PC-9 (cell line): ENCODE measurements at regions of chr20 and their contacts with region 1.

Region 1: DNA sequence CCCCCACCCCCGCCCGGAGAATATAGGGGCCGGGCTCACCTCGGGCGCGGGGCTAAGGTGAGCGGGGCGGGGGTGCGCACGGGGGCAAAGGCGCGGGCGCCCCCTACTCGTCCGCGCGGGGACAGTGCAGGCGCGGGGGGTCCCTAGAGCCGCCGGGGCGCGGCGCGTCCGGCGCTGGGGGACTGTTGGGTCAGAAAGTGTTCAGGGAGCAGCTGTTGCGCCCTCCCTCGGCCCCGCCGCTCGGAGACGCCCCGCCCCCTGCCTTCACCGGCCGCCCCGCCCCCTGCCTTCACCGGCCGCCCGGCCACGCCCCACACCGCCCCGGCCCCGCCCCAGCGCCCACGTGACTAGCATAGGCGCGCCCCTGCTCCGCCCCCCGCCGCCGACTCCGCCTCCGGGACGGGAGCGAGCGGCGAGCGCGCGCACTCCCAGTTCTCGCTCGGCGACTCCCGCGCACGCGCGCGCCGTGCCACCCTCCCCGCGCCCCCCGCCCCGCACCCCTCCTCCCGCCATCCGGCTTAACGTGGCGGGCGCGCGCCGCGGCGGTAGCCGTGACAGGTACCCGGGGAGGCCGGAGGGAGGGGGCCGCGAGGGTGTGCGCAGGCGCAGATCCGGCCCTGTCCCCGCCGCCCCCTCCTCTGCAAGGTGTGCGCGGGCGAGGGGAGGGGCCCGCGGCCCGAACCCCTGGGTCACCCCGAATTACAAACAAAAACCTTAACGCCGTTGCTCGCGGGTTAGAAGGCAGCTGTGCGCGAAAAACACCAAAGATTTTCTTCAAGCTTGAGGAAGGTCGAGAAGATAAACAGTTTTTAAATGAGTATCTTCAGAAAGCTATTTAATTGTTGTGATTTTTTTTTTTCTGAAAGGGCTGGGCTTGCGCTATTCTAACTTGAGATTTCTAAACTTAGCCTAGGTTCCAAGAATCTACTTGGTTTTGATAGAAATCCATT is 704 bp upstream of the ZNF217 start:
- DNase-seq: peak; percentile 73 to 98
- H3K4me3 ChIP-seq: peak overlapping the region; percentile 99
- H3K27ac ChIP-seq: peak overlapping the region; percentile 98
- H3K4me1 ChIP-seq: peaks cover 59% of the 10 kb centered on the region
- H3K27me3 ChIP-seq: no peaks in the 10 kb centered on the region
- CTCF ChIP-seq: no peak; the same call in 1 of the 2 replicates

Region 2: GRCh38 chr20:52991830-52992229 is 602.5 kb before region 1 on chr20:
- CTCF ChIA-PET with region 1: no interaction called
- POLR2A ChIA-PET with region 1: no interaction called
- intact Hi-C with region 1: no loop called
- DNase-seq: no peak
- H3K4me3 ChIP-seq: no peak overlapping the region
- H3K27ac ChIP-seq: no peak overlapping the region
- H3K4me1 ChIP-seq: no peaks in the 10 kb centered on the region
- H3K27me3 ChIP-seq: peaks cover 28% of the 10 kb centered on the region
- CTCF ChIP-seq: no peak

Region 3: DNA sequence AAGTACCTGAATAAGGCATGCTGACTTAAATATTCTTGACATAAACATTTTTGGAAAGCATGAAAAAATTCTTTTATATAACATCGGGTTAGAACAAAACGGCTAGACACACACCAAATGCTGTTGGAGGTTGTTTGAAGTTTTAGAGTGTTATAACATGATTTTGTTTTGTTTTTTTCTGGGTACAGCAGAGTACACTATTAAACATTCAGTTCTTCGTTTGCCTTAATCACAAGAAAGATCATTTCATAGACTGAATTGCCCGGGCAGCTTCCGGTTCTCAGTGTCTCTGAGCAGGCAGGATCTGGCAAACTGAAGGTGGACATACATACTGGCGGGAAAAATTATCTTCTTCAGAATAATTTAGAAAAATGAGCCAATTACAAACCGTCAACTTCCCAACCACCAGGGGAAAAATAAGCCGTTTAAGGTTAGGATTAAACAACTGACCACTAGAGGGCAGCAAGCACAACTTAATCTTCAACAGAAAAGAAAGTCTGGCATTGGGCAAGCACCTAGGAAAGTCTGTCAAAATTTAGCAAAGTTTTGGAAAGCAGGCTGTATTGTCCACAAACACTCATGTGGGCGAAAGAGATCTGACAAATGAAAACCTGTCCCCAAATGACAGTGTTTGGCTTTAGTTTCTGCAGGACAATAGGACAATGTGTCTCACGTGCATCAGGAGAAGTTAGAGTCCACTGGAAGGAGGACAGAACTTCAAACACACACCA is 15.7 kb before region 1 on chr20:
- CTCF ChIA-PET with region 1: no interaction called
- POLR2A ChIA-PET with region 1: interaction called, 3 read pairs
- intact Hi-C with region 1: loop called (anchors 2 kb)
- DNase-seq: peak; percentile 61 to 77
- H3K4me3 ChIP-seq: peak overlapping the region; percentile 49
- H3K27ac ChIP-seq: peak overlapping the region; percentile 91
- H3K4me1 ChIP-seq: peaks cover 64% of the 10 kb centered on the region
- H3K27me3 ChIP-seq: no peaks in the 10 kb centered on the region
- CTCF ChIP-seq: peak; percentile 96

Region 4: DNA sequence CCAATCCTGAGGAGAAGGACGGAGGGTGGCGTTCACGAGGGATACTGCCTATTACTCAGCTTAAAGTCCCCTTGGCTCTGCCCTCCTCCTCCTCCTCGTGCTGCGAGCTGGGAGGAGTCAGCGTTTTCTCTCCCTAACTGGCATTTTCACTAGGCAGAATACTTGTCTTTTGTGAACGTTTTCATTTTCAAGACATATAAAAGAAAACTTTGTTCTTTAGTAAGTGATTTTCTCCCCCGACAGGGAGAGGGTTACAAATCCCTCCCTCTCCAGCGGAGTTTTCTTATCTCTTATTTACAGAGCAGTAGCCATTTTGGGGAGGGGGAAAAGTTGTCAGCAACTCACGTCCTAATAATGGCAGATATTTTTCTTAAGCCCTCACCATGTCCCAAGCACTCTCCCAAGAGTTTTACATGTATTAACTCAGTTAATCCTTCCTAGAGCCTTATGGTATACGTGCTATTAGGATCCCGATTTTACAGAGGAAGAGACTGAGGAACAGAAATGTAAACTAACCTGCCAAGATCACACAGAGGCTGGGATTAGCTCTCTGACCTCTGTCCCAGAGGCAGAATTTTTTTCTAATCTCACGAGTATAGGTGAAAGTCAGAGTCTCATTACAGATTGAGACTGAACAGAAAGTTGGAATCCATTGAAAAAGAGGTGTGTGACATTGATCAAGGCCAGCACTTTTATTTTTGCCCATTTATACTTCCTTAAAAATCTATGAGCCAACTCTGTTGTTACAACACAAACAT is 29.3 kb after region 1 on chr20:
- CTCF ChIA-PET with region 1: interaction called, 8 read pairs
- POLR2A ChIA-PET with region 1: interaction called, 7 read pairs
- intact Hi-C with region 1: loop called (anchors 1 kb)
- DNase-seq: peak; percentile 62 to 69
- H3K4me3 ChIP-seq: peak overlapping the region; percentile 58
- H3K27ac ChIP-seq: peak overlapping the region; percentile 98
- H3K4me1 ChIP-seq: peaks cover 57% of the 10 kb centered on the region
- H3K27me3 ChIP-seq: no peaks in the 10 kb centered on the region
- CTCF ChIP-seq: no peak

Region 5: DNA sequence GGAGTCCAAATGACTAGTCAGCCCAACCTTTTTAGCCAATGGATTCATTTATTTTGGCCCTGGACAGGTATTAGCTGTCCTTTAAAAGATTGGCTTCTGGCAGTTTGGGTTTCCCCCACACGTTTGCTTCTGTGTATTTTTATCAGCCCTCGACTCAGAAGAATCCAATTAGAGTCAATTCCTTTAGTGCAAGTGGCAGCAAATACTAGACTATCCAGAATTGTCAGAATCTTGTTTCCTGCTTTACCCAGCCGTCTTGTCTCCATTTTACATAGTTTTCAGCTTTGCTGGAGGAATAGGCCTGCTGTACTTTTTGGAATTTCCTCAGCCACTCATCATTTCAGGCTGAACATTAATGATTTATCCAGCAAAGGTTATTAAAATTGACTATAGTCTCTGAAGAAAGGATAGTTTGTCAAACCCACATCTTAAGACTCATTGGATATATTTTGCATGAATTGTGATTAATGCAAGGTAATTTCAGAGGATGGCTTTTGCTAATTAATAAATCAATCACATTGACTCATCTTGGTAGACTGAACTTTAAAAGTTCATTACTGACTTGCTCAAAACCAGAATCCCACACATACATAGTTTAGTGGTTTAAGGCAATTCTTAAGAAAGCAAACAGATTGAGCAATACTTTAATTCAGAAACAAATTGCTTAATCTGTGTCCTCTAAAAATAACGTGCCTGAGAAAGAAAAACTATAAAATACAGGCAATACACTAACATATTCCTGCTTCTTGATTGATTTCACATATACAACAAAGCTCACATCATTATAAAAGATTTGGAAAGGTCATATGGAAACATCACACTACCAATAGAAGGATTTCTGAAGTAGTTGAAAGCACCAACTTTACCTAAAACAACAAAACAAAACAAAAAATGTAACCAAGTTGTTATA is 62.2 kb after region 1 on chr20:
- CTCF ChIA-PET with region 1: no interaction called
- POLR2A ChIA-PET with region 1: interaction called, 8 read pairs
- intact Hi-C with region 1: loop called (anchors 5 kb)
- DNase-seq: peak in 1 of 2 experiments; percentile 78
- H3K4me3 ChIP-seq: peak overlapping the region; percentile 12; the same call in 1 of the 2 replicates
- H3K27ac ChIP-seq: peak overlapping the region; percentile 84
- H3K4me1 ChIP-seq: peaks cover 65% of the 10 kb centered on the region
- H3K27me3 ChIP-seq: no peaks in the 10 kb centered on the region
- CTCF ChIP-seq: no peak

Region 6: DNA sequence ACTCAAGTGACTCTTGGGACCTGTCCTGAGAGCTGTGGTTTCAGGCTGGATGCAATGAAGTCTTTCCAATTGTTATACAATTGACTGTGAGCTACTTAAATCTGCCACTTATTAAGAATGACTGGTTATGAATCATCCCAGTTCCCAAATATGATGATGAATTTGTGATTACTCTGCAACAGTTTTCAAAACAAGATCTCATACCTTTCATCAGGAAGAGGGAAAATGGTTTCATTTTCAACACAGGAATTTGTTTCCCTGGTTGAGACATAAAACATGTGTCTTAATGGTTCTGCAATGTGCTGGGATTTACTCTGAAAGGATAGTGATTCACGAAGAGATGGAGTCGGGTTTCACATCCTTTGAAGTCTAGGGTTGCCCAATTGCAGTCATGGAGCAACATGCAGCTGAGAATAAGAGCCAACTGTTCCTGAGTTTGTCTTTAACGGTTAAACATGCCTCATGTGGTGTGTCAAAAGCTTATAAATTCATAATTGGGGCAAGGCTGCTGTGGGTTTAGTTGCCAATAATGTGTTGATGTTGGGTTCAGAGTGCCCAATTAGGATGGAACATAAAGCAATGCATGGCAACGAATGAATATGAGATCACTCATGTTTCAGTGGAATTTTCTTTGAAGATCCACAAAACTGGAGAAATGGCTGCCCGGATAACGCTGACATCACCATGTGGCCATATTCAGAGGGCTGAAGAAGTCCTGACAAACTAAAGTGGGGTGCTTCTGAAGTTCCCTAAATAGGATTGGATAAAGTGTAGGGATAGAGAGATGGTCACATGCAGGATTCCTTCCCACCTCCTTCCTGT is 538.5 kb after region 1 on chr20:
- CTCF ChIA-PET with region 1: no interaction called
- POLR2A ChIA-PET with region 1: no interaction called
- intact Hi-C with region 1: loop called (anchors 2 kb)
- DNase-seq: peak; percentile 62 to 100
- H3K4me3 ChIP-seq: peak overlapping the region; percentile 6; the same call in 1 of the 2 replicates
- H3K27ac ChIP-seq: peak overlapping the region; percentile 99
- H3K4me1 ChIP-seq: peaks cover 48% of the 10 kb centered on the region
- H3K27me3 ChIP-seq: no peaks in the 10 kb centered on the region
- CTCF ChIP-seq: no peak